ENCODE measurements at regions of chr1 and their contacts with region 1.

Region 1: GRCh38 chr1:23772049-23772853 is 6.0 kb upstream of the PITHD1 start:
- DNase-seq: peak; percentile 75
- H3K4me3 ChIP-seq: peak overlapping the region in 1 of 2 experiments; percentile 38; a peak in 1 of 4 replicates
- H3K27ac ChIP-seq: no peak overlapping the region
- H3K4me1 ChIP-seq: peaks cover 5 to 9% of the 10 kb centered on the region in 2 experiments; a peak in 2 of 4 replicates
- H3K27me3 ChIP-seq: no peaks in the 10 kb centered on the region
- CTCF ChIP-seq: peak; percentile 88
- EP300 ChIP-seq: no peak
- RAD21 ChIP-seq: peak; percentile 82

Region 2: DNA sequence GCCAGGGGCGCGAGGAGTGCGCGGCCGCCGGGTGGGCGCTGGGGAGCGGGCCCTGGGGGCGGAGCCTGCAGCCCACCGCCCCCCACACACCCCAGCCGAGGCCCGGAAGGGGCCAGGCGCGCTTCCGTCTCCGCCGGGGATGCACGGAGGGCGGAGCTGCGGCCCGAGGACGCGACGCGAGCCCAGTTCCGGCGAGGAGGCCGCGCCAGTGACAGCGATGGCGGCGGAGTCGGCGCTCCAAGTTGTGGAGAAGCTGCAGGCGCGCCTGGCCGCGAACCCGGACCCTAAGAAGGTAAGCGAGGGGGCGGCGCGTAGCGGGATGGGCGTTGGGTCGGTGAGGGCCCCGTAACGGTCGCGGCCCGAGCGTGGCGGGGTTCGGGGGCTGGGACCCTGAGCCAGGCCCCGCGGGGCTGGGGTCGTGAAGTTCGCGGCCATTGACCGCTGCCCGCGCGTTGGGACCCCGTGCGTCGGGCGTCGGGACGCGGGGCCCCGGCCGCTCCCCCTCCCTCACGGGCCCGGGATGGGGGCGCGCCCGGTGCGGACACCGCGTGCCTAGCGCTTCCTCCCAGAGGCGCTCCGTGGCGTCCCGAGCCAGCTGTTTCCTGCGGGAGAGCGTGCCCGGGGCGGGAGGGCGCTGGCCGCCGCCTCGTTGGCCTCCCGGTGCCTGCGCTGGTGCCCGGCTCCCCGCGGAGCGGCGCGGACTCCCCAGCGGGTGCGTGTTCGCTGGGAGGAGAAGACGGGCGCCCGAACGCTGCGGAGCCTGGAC is 28.8 kb before region 1 on chr1 and contains the start of gene ELOA:
- CTCF ChIA-PET with region 1: interaction called, 21 read pairs
- POLR2A ChIA-PET with region 1: no interaction called
- DNase-seq: peak; percentile 99
- H3K4me3 ChIP-seq: peak within 1 kb of the TSS; percentile 74 to 93
- H3K27ac ChIP-seq: peak within 1 kb of the TSS; percentile 64 to 88; a peak in 3 of 4 replicates
- H3K4me1 ChIP-seq: peaks cover 4 to 14% of the 10 kb centered on the region in 2 experiments; a peak in 2 of 4 replicates
- H3K27me3 ChIP-seq: no peaks in the 10 kb centered on the region
- CTCF ChIP-seq: no peak
- EP300 ChIP-seq: no peak
- RAD21 ChIP-seq: no peak
- polyA plus RNA-seq, gene ELOA: 14.5 and 17.7 TPM in 2 replicates

Region 3: GRCh38 chr1:23759277-23759676 is 13.0 kb before region 1 on chr1:
- CTCF ChIA-PET with region 1: interaction called, 16 read pairs
- POLR2A ChIA-PET with region 1: interaction called, 7 read pairs
- DNase-seq: no peak
- H3K4me3 ChIP-seq: no peak overlapping the region
- H3K27ac ChIP-seq: no peak overlapping the region; a peak in 1 of 4 replicates
- H3K4me1 ChIP-seq: peaks cover 0 to 17% of the 10 kb centered on the region in 2 experiments; a peak in 2 of 4 replicates
- H3K27me3 ChIP-seq: no peaks in the 10 kb centered on the region
- CTCF ChIP-seq: no peak
- EP300 ChIP-seq: no peak
- RAD21 ChIP-seq: no peak

Region 4: GRCh38 chr1:23784846-23785245 is 12.6 kb after region 1 on chr1:
- CTCF ChIA-PET with region 1: interaction called, 12 read pairs
- POLR2A ChIA-PET with region 1: no interaction called
- DNase-seq: no peak
- H3K4me3 ChIP-seq: no peak overlapping the region
- H3K27ac ChIP-seq: no peak overlapping the region
- H3K4me1 ChIP-seq: peaks cover 0 to 7% of the 10 kb centered on the region in 2 experiments; a peak in 1 of 4 replicates
- H3K27me3 ChIP-seq: no peaks in the 10 kb centered on the region
- CTCF ChIP-seq: no peak
- EP300 ChIP-seq: no peak
- RAD21 ChIP-seq: no peak

Region 5: DNA sequence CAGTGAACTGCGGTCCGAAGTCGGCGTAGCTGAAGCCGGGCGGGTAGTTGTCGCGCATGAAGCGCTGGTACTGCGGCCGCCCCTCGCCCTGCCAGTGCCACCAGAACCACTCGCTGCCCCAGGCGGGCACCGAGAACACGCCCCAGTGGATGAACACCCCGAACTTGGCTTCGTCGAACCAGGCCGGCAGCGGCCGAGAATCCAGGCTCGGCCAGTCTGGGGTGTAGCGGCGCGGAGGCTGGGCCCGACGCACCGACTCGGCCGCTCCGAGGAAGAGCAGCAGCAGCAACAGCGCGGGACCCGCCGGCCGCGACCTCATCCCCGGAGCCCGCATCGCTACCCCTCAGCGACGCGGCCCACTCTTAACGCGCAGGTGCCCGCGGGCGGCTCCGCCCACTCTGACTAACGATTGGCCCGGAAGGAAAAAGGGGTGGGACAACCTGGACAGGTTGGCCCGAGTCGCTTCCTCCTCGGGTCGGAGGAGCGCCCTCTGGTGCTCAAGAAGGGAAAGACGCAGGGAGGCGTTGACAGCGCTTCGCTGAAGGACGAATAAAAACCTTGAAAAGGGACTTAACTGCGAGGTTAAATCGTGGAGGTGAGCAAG is 95.8 kb after region 1 on chr1 and contains the start of gene FUCA1:
- CTCF ChIA-PET with region 1: interaction called, 16 read pairs
- POLR2A ChIA-PET with region 1: no interaction called
- DNase-seq: peak; percentile 98
- H3K4me3 ChIP-seq: peak within 1 kb of the TSS; percentile 75 to 87
- H3K27ac ChIP-seq: no peak within 1 kb of the TSS; a peak in 1 of 4 replicates
- H3K4me1 ChIP-seq: peaks cover 0 to 8% of the 10 kb centered on the region in 2 experiments; a peak in 1 of 4 replicates
- H3K27me3 ChIP-seq: no peaks in the 10 kb centered on the region; the same call in 1 of the 2 replicates
- CTCF ChIP-seq: peak; percentile 87
- EP300 ChIP-seq: no peak
- RAD21 ChIP-seq: peak; percentile 68
- polyA plus RNA-seq, gene FUCA1: 31.9 and 35.2 TPM in 2 replicates

Region 6: GRCh38 chr1:23910553-23911246 is 138.4 kb after region 1 on chr1:
- CTCF ChIA-PET with region 1: interaction called, 17 read pairs
- POLR2A ChIA-PET with region 1: no interaction called
- DNase-seq: no peak
- H3K4me3 ChIP-seq: no peak overlapping the region
- H3K27ac ChIP-seq: no peak overlapping the region
- H3K4me1 ChIP-seq: peaks cover 0 to 4% of the 10 kb centered on the region in 2 experiments; a peak in 1 of 4 replicates
- H3K27me3 ChIP-seq: 0 out of 2 replicates have a peak, but pooled peaks cover 2% of the 10 kb centered on the region
- CTCF ChIP-seq: no peak
- EP300 ChIP-seq: no peak
- RAD21 ChIP-seq: no peak

Measured in SK-N-SH (cell line).